Mammary epithelial cell (primary cell): ENCODE measurements at regions of chr22 and their contacts with region 1.

Region 1: DNA sequence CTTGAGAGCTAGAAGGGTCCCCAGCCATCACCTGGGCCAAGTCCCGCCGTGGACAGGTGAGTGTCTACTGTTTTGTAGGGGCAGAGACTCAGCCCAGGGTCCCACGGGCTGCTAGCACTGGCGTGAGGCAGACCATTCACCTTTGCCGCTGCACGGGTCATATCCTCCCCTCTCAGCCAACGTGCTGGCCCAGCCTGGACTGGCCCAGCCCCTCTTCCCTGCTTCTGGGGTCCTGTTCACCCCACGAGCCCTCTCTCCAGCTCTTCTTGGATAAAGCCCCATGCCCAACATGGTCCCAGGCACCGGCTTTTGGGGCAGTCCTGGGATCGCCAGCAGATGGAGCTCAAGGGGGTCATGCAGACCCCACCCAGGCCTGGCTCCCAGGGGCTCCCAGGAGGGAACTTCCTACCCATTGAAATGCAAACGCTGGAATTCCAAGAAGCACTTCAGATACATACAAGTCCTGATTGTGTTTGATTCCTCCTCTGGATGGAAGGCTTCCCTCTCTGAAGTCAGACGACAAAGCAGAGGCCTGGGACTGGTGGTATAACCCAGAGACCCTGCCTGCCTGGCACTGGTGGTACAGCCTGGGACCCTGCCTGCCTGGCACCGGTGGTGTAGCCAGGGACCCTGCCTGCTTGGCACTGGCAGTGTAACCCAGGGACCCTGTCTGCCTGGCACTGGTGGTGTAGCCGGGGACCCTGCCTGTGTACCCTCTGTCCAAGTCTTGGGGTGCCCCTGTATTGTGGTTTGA is 8.9 kb upstream of the SEPTIN5 start:
- DNase-seq: no peak
- H3K4me3 ChIP-seq: no peak overlapping the region
- H3K27ac ChIP-seq: no peak overlapping the region
- H3K4me1 ChIP-seq: no peaks in the 10 kb centered on the region
- H3K27me3 ChIP-seq: no peaks in the 10 kb centered on the region
- CTCF ChIP-seq: no peak

Region 2: DNA sequence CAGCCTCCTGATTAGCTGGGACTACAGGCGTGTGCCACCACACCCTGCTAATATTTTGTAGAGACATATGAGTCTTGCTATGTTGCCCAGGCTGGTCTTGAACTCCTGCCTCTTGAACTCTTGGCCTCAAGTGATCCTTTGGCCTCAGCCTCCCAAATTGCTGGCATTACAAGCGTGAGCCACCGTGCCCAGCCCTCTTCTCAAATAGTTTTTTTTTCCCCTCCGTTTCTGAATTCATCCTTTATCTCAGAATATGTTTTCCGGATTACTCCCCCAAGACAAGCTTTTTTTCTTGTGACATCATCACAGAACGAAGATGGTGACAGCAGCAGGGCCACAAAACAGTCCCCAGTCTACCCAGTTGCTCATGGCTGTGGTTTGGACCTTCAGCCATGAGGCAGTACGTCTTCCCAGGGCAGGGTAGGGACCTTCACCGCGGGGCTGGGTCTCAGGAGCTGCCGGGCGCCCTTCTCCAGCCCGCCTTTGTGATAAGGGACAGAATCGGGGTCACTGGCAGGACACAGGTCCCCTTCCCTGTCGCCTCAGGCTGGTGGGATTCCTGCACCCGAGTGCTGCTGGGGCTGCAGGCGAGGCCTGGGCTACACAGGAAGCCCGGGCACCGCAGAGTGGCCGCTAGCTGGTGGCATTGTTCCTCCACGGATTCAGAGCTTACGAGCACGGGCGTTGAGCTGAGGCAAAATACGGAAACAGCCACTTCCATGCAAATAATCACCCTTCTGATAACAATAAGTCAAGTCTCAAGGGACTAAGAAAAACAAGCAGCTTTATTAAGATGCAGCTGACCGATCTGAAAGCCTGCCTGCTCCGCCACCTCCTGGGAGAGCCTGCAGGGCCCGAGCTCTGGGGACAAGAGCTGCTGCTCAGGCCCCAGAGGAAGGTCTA is 67.3 kb after region 1 on chr22:
- CTCF ChIA-PET with region 1: no interaction called
- dilution Hi-C with region 1: loop called (anchors 5 kb)
- in situ Hi-C with region 1: no loop called
- intact Hi-C with region 1: no loop called
- DNase-seq: no peak
- H3K4me3 ChIP-seq: no peak overlapping the region
- H3K27ac ChIP-seq: no peak overlapping the region
- H3K4me1 ChIP-seq: no peaks in the 10 kb centered on the region
- H3K27me3 ChIP-seq: no peaks in the 10 kb centered on the region
- CTCF ChIP-seq: no peak